ENCODE measurements at regions of chr11 and their contacts with region 1.

Region 1: DNA sequence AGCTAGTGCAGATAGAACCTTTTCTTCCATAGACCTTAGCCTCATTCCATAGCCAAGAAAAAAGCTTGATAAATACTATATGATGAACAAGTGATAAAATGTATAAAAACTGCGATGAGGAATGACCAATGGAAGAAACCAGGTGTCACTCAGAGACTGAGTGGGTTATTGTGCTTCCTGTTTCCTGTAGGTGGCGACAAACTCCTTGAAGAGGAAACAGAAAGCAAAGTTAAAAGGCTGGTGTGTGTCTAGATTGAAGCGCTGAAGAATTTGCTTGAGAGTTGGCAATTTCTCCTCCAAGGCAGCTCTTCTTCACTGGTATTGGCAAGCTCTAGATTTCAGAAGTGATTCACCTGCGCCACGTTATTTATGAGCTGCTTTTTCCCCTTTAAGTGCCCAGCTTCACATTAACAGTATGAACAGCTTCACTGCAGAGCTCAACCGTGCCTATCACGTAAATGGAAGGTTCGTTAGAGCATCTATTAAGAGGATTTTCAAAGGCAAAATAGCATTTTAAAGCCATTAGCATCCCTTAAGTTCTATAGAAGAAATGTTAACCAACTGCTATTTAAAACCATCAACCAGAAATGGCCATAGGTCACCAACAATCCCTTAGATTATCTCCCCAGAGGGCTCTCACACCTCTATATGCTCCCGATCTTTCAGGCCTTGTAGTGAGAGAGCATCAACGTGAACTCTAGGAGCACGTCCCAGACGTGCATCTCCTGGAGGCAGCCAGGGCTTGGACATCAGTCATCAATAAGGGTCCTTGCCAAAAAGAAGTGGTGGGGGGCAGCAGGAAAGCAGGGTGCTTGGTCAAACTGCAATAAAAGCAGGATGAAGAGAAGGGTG is 179.4 kb downstream of the CADM1 start:
- H3K4me3 Mint-ChIP-seq: no peak overlapping the region
- H3K27ac Mint-ChIP-seq: no peak overlapping the region
- H3K4me1 Mint-ChIP-seq: no peaks in the 10 kb centered on the region
- H3K27me3 Mint-ChIP-seq: no peaks in the 10 kb centered on the region

Region 2: GRCh38 chr11:115347138-115347537 is 22.3 kb after region 1 on chr11:
- intact Hi-C with region 1: no loop called
- H3K4me3 Mint-ChIP-seq: no peak overlapping the region
- H3K27ac Mint-ChIP-seq: no peak overlapping the region
- H3K4me1 Mint-ChIP-seq: no peaks in the 10 kb centered on the region
- H3K27me3 Mint-ChIP-seq: peaks cover 2% of the 10 kb centered on the region

Region 3: DNA sequence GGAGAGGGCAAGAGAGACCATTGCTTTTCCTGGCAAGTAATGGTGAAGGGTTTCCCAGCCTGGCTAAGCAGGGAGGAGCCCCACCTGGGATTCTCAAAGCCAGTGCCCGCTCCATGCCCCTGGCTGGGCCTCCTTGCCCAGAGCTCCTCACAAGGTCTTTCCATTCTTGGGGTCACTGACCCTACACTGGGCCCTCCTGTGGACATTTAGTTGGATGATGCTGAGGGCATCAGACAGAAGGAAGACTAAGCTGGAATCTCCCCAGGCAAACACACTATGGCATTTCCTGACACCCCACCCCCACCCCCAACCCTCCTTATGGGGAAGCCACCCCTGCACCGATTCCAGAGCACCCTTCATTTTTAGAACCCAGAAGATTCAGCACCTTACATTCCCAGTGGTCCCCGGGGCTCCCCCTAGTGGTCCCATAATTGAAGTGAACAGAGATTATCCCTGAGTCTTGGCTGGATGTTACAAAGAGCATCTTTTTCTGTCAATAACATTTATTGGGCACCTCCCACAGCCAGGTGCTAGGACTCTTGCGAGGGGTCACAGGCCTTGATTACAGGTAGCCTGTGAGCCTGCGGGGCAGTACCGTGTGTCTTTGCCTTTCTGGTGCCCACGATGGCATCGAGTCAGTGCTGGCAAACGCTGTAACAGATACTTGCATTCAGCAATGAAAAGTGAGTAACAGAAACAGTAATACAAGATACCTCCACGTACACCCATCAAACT is 899.5 kb after region 1 on chr11:
- intact Hi-C with region 1: loop called (anchors 5 kb)
- H3K4me3 Mint-ChIP-seq: no peak overlapping the region
- H3K27ac Mint-ChIP-seq: no peak overlapping the region
- H3K4me1 Mint-ChIP-seq: no peaks in the 10 kb centered on the region
- H3K27me3 Mint-ChIP-seq: peaks cover 9% of the 10 kb centered on the region

Region 4: DNA sequence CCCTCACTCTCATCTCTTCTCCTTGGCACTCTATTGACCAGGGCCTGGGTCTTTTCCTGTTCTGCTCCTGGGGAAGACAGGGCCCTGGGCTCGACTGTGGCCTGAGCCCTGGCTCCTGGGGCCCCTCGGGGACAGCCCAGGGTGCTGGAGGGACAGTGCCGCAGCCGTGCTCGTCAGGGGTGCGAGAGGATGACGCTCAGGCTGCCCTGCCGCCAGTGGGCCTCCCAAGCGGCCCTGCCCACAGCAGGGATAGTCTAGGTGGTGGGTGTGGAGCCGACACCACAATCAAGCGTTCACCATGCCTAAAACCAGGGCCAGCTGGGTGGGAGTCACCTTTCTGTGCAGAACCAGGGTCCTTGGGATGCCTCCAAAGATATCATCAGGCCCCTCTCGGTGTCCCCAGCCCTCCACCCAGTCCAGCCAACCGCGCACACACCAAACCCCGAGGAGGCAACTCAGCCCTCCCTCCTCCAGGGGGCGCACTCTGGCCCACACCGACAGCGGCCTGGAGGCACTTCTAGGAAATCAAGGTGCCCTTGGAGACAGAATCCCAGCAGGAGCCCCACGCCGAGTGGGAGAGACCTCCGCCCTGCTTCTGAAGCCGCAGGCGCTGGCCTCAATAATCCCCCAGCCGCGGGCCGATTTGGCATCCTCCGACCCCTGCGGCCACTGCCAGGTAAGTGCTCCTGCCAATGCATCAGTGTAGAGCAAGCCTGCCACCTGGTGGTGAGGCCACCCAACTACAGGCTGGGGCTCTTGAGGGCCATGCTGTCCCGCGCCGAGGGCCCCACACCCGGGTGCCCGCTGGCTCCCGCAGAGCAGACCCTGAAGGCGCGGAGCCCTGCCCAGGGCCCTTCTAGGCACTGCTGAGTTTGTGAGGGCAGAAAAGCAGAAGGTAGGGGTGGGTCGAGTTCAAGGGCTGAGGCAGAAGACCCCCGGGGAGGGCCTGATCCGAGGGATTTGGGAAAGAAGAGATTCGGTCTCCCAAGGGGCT is 951.5 kb after region 1 on chr11:
- intact Hi-C with region 1: loop called (anchors 2 kb)
- H3K4me3 Mint-ChIP-seq: no peak overlapping the region
- H3K27ac Mint-ChIP-seq: no peak overlapping the region
- H3K4me1 Mint-ChIP-seq: no peaks in the 10 kb centered on the region
- H3K27me3 Mint-ChIP-seq: peaks cover 13% of the 10 kb centered on the region

Region 5: DNA sequence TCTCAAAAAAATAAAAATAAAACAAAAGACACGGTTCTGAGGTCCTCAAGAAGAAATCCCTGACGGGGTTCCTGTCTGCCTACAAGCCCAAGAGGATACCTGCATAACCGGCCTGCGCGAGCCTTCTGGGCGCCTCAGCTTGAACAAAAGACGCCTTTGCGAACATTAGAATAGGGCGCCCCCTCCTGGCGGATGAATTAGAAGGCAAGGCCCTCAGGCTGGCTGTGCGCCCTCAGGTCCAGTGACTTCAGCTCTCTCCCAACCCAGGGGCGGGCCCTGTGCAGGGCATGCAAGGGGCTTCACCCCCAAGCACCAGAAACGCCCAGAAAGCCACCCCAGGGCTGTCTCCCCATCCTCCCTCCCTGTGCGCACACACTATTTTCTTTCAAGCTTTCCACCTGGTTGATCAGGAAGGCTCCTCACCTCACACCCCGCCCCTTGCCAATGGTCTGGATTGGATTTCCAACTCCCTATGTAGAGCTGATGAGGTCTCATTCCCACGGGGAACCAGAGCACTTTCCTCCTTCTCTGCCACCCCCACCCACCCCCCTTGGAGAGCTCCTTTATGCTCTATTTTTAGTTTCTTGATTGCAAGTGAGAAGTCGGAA is 1174.7 kb after region 1 on chr11:
- intact Hi-C with region 1: loop called (anchors 5 kb)
- H3K4me3 Mint-ChIP-seq: no peak overlapping the region
- H3K27ac Mint-ChIP-seq: no peak overlapping the region
- H3K4me1 Mint-ChIP-seq: no peaks in the 10 kb centered on the region
- H3K27me3 Mint-ChIP-seq: peaks cover 52% of the 10 kb centered on the region